Mammary epithelial cell (primary cell): ENCODE measurements at regions of chr17 and their contacts with region 1.

Region 1: DNA sequence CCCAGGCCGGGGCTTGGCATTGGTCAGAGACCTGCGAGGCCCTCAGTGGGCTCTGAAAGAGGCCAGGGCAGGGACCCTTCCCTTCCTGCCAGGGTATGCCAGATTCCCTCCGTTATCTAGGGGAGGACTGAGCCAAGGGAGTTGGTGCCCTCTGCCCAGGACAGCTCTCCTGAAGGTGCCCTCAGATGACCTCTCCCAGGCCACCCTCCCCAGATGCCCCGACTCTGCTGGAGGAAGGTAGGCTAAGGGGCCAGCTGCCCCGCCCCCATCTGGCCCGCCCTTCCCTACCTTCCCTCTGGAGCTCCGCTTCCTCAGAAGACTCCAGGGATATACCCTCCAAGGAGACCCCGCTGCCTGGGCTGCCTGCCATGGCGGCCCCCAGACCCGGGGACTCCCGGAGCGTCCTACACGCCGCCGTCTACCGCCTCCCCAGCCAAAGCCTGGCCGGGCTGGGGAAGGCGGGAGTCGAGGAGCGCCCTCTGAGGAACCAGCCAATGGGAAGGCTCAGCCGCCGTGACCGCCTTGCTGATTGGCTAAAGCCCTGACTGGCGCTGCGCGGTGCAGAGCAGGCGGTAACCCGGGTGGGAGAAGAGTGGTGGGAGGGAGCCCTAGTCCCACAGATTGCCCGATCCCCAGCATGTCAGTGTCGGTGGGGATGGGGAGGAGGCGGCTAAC is 7.0 kb downstream of the MPP2 start:
- DNase-seq: peak; percentile 68
- H3K4me3 ChIP-seq: peak overlapping the region; percentile 1 to 43 (median 12)
- H3K27ac ChIP-seq: no peak overlapping the region
- H3K4me1 ChIP-seq: peaks cover 21% of the 10 kb centered on the region
- H3K27me3 ChIP-seq: no peaks in the 10 kb centered on the region
- CTCF ChIP-seq: no peak

Region 2: GRCh38 chr17:42918902-42919521 is 981.3 kb before region 1 on chr17:
- CTCF ChIA-PET with region 1: no interaction called
- dilution Hi-C with region 1: no loop called
- in situ Hi-C with region 1: no loop called
- intact Hi-C with region 1: no loop called
- DNase-seq: no peak
- H3K4me3 ChIP-seq: no peak overlapping the region
- H3K27ac ChIP-seq: no peak overlapping the region
- H3K4me1 ChIP-seq: no peaks in the 10 kb centered on the region
- H3K27me3 ChIP-seq: no peaks in the 10 kb centered on the region
- CTCF ChIP-seq: no peak

Region 3: DNA sequence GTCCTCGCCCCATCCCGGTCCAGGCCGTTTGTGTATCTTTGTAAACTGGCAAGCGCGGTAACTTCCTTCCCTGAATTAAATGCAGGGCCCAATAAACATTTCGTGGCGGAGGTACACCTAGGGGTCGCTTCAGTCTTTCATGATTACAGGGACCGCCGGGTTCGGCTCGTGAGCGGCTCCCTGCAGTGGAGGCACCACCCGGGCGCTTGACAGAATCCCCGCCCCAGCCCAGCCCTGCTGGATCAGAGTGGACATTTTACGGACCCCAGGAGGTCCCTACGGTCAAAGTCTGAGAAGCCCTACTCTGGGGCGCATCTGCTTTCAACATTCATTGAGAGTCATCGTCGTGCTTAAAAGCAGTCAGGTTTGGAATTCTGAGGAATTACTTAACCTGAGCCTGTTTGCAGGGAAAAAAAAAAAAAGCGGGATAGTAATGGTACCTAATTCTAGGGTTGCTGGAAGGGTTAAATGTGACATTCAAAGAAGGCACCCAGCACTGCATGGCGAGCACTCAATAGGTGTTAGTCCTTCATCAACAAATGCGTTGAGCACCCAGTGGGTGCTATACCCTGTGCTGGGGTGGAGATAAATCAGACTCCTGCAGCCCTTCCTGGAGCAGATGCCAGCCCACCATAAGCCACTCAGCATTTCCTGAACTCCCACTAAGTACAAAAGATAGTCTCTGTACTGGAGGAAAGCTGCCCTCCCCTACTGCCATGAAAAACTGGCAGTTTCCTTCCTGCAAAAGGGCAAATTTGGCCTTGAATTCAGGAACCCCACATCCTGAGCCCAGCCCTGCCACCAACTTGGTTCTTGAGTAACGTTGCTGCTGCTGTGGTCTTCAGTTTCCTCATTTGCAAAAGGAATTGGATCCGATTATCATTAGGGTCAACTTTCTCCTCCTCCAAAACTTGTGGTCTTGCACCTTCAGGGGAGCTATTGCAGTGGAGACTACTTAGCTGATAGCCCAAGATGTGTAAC is 120.9 kb before region 1 on chr17:
- CTCF ChIA-PET with region 1: no interaction called
- dilution Hi-C with region 1: loop called (anchors 5 kb)
- in situ Hi-C with region 1: no loop called
- intact Hi-C with region 1: no loop called
- DNase-seq: no peak
- H3K4me3 ChIP-seq: peak overlapping the region; percentile 51 to 97 (median 89)
- H3K27ac ChIP-seq: peak overlapping the region; percentile 93
- H3K4me1 ChIP-seq: peaks cover 14% of the 10 kb centered on the region
- H3K27me3 ChIP-seq: no peaks in the 10 kb centered on the region
- CTCF ChIP-seq: peak in 1 of 2 donors; percentile 19